ENCODE measurements at regions of chr22 and their contacts with region 1.

Region 1: DNA sequence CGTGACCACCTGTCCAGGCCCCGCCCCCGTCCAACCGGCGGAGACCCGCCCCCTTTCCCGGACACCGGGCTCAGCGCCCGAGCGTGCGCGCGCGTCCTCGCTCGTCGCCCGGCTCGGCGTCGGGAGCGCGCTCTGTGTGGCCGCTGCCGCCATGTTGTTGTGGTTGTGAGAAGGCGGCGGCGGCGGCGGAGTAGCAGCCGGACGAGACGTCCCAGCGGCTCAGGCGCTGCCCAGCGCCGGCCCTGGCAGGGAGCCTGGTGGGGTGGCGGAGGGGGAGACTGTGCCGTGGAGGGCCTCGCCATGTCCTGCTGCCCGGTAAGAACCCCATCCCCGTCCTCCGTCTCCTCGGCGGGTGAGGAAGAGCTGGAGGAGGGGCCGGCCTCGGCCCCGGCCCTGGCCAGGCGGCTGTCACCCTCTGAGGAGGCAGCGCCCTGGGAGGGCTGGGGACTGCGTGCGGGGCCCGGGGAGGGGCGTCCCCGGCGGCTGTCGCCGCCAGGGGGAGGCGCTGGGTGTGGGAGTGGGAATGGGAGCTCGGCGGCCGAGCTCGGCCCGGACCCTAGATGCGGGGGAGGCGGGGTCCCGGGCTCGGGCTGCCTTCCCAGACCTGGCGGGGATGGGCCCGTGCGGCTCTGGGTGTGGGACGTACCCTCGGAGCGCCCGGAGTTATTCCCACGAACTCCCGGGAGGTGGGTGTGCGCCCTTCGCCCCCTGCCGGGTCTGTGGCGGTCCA is at the start of gene MTMR3:
- DNase-seq: peak; percentile 98
- H3K4me3 Mint-ChIP-seq: peak within 1 kb of the TSS; percentile 92
- H3K27ac Mint-ChIP-seq: peak within 1 kb of the TSS; percentile 68
- H3K4me1 Mint-ChIP-seq: no peaks in the 10 kb centered on the region
- H3K27me3 Mint-ChIP-seq: no peaks in the 10 kb centered on the region
- CTCF ChIP-seq: peak; percentile 63
- total RNA-seq, gene MTMR3: 34.5 and 40.1 TPM in 2 replicates

Region 2: GRCh38 chr22:29375398-29376076 is 507.7 kb before region 1 on chr22:
- CTCF ChIA-PET with region 1: interaction called, 14 read pairs
- intact Hi-C with region 1: no loop called
- DNase-seq: no peak
- H3K4me3 Mint-ChIP-seq: no peak overlapping the region
- H3K27ac Mint-ChIP-seq: peak overlapping the region; percentile 83
- H3K4me1 Mint-ChIP-seq: peaks cover 47% of the 10 kb centered on the region
- H3K27me3 Mint-ChIP-seq: no peaks in the 10 kb centered on the region
- CTCF ChIP-seq: no peak

Region 3: GRCh38 chr22:29457730-29458129 is 425.5 kb before region 1 on chr22:
- CTCF ChIA-PET with region 1: no interaction called
- intact Hi-C with region 1: no loop called
- DNase-seq: peak; percentile 51
- H3K4me3 Mint-ChIP-seq: no peak overlapping the region
- H3K27ac Mint-ChIP-seq: no peak overlapping the region
- H3K4me1 Mint-ChIP-seq: no peaks in the 10 kb centered on the region
- H3K27me3 Mint-ChIP-seq: no peaks in the 10 kb centered on the region
- CTCF ChIP-seq: no peak

Region 4: DNA sequence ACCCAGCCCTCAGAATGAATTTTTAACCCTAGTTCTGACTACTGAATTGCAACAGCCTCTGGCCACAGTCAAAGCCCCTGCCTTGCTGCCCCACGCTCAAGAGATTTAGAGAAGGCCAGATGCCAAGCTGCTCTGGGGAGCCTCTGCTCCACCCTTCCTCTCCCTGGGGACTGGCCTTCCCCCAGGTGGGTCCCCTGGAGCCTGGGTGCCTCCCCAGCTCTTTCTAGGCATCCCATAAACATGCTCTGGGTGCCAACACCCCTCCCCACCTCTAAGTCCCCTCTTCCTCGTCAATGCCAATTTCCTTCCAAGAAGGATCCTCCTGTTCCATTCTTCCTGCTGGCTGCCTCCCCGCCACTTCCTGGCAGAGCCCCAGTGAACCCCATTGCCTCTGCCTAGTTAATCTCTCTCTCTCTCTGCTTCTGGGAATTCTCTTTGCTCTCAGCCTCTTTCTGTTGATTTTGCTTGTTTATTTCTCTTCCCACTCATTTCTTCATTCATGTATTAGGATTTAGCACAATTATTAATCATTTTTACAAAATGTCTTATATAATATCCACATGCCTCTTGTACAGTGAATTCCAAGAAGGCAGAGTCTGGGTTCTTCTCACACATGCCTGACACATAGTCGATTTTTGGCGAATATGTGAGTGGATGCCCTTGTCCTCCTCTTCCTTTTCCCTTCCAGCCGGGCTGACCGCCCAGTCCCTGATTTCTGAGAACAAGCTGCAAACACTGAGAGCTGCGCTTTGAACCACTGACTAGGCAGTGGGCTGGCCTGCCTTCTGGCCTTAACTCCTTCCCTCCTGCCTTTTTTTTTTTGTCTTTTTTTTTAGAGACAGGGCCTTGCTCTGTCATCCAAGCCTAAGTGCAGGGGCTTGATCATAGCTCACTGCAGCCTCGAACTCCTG is 98.5 kb before region 1 on chr22:
- CTCF ChIA-PET with region 1: no interaction called
- intact Hi-C with region 1: no loop called
- DNase-seq: no peak
- H3K4me3 Mint-ChIP-seq: no peak overlapping the region
- H3K27ac Mint-ChIP-seq: no peak overlapping the region
- H3K4me1 Mint-ChIP-seq: peaks cover 40% of the 10 kb centered on the region
- H3K27me3 Mint-ChIP-seq: no peaks in the 10 kb centered on the region
- CTCF ChIP-seq: no peak

Region 5: DNA sequence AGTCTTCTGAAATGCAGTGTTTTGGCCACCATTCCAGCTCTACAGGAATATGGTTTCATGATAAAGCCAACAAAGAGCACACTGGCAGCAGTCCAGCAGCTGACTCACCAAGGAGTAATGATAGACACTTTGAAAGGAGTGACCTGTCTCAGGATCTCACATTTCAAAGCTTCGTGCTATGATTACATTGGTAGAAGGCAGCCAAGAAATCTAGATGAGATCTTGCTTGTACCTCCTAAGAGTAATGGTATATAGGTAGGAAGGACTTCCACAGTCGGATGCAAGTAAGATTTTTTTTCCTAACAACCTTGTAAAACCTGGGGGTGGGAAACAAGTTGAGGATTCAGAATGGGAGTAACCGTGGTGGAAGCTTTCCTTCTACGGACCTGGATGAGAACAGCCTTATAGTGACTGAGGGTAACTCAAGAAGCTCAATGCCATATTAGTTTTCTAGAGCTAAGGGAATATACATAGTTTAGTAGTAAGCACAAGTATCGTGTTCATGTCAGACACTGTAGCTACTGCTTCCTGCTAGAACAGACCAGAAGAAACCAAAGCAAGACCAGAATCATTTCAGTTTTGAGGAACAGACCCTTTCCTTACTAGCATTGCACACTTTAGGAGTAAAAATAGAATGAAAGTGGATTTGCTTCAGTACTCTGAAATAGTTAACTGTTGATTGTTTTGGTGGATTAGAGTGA is 24.8 kb after region 1 on chr22:
- CTCF ChIA-PET with region 1: interaction called, 11 read pairs
- intact Hi-C with region 1: no loop called
- DNase-seq: peak; percentile 84
- H3K4me3 Mint-ChIP-seq: peak overlapping the region; percentile 65
- H3K27ac Mint-ChIP-seq: peak overlapping the region; percentile 89
- H3K4me1 Mint-ChIP-seq: peaks cover 74% of the 10 kb centered on the region
- H3K27me3 Mint-ChIP-seq: no peaks in the 10 kb centered on the region
- CTCF ChIP-seq: no peak

Measured in Calu3 (cell line).